ENCODE measurements at regions of chr16 and their contacts with region 1.

Region 1: GRCh38 chr16:75943705-75944514 is 217.6 kb upstream of the CPHXL start:
- DNase-seq: no peak
- H3K4me3 ChIP-seq: no peak overlapping the region
- H3K27ac ChIP-seq: no peak overlapping the region
- H3K4me1 ChIP-seq: no peaks in the 10 kb centered on the region
- H3K27me3 ChIP-seq: no peaks in the 10 kb centered on the region
- CTCF ChIP-seq: no peak
- EP300 ChIP-seq: no peak
- POLR2A ChIP-seq: no peak

Region 2: DNA sequence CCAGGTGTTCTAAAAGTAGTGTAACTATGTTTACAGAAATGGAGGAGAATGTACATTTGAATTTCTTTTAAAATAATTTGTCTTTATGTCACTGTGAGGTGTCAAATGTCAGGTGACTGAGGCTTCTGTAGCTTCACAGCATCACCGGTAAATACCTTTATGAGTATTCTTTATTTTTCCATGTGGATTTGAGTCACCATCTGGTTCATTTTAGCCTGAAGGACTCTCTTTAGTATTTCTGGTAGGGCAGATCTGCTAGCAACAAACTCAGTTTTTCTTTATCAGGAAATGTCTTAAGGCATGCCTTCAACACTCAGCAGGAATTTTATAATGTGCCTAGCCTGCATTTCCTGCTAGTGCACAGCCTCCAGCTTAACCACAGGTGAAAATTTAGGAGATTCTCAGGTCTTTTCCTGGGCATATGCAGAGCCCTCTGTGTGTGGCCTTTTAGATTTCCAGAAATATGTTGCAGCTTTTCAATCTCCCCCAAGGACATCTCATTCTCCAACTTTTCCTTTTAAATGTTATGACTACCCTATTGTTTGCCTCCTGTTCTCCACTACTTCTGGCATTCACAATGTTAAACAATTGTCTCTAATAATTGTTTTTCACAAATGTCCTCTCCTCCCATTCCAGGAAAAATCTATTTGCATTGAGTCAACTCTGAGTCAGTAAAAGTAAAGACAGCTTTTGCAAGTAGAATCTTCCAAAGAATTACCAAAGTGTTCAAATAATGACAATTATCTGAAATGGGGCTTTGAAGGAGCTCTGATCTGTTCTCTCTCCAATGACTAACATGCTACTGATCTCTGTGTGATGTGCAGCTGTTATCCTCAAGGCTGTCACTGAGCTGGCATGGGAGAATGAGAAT is 21.8 kb after region 1 on chr16:
- intact Hi-C with region 1: no loop called
- DNase-seq: no peak
- H3K4me3 ChIP-seq: no peak overlapping the region
- H3K27ac ChIP-seq: no peak overlapping the region
- H3K4me1 ChIP-seq: no peaks in the 10 kb centered on the region
- H3K27me3 ChIP-seq: no peaks in the 10 kb centered on the region
- CTCF ChIP-seq: no peak
- EP300 ChIP-seq: no peak
- POLR2A ChIP-seq: no peak

Region 3: DNA sequence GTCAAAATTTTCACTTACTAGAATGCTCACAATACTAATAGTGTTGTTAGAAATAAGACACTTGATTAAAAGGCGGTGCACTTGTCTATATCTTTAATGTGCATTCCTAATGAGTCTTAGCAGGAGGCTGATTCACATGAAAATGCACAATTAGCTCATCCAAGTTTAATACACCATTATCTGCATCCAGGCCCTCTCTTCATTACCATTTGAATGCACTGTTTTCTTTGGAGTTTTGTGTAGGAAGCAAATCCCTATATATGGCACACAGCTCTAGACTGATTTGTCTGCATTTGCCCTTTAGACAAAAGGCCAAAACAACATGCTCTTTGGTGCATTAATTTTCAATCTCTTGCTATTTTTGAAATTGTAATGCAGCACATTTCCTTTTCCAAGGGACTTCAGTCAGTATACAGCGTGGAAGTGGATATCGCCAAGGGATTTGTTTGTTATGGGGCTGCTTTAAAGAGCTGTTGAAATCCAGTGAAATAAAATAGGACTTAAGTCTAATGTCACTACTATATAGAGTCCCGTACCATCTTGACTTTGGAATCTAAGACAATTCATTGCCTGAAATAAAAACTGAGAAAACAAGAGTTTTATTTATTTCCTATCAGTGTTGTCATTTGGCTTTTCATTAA is 40.0 kb after region 1 on chr16:
- intact Hi-C with region 1: loop called (anchors 5 kb)
- DNase-seq: no peak
- H3K4me3 ChIP-seq: no peak overlapping the region
- H3K27ac ChIP-seq: no peak overlapping the region
- H3K4me1 ChIP-seq: no peaks in the 10 kb centered on the region
- H3K27me3 ChIP-seq: no peaks in the 10 kb centered on the region
- CTCF ChIP-seq: no peak
- EP300 ChIP-seq: no peak
- POLR2A ChIP-seq: no peak

Region 4: GRCh38 chr16:76318565-76318964 is 374.7 kb after region 1 on chr16:
- intact Hi-C with region 1: no loop called
- DNase-seq: no peak
- H3K4me3 ChIP-seq: no peak overlapping the region
- H3K27ac ChIP-seq: no peak overlapping the region
- H3K4me1 ChIP-seq: no peaks in the 10 kb centered on the region
- H3K27me3 ChIP-seq: no peaks in the 10 kb centered on the region
- CTCF ChIP-seq: no peak
- EP300 ChIP-seq: no peak
- POLR2A ChIP-seq: no peak

Measured in esophagus muscularis mucosa (tissue), 4 donors.